Panc1 (cell line): ENCODE measurements at regions of chr1 and their contacts with region 1.

Region 1: DNA sequence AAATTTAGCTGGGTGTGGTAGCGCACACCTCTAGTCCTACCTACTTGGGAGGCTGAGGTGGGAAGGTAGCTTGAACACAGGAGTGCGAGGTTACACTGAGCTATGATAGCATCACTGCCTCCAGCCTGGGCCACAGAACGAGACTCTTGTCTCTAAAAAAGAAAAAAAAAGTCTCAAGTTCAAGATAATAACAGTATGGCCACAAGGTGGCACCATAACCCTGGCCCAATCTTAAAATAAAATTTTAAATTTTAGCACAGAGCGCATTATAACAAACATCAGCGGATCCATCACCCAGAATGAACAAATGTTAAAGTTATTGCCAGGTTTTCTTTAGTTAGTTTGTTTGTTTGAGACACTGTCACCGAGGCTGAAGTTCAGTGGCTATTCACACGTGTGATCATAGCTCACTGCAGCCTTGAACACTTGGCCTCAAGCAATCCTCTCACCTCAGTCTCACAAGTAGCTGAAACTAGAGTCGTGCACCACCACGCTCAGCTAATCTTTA is 2.9 kb upstream of the HTR6 start:
- DNase-seq: no peak
- ATAC-seq: no peak
- H3K4me3 ChIP-seq: no peak overlapping the region
- H3K27ac ChIP-seq: no peak overlapping the region
- H3K4me1 ChIP-seq: peaks cover 12% of the 10 kb centered on the region
- H3K27me3 ChIP-seq: peaks cover 5% of the 10 kb centered on the region; the same call in 1 of the 2 replicates
- CTCF ChIP-seq: peak; percentile 88

Region 2: GRCh38 chr1:19311959-19312781 is 349.6 kb before region 1 on chr1 and contains the starts of genes AKR7A2 and SLC66A1:
- CTCF ChIA-PET with region 1: no interaction called
- POLR2A ChIA-PET with region 1: no interaction called
- in situ Hi-C with region 1: no loop called
- intact Hi-C with region 1: no loop called
- DNase-seq: peak; percentile 56
- ATAC-seq: peak; percentile 95
- H3K4me3 ChIP-seq: peak within 1 kb of the TSS; percentile 80 to 82
- H3K27ac ChIP-seq: peak within 1 kb of the TSS; percentile 89
- H3K4me1 ChIP-seq: peaks cover 18% of the 10 kb centered on the region
- H3K27me3 ChIP-seq: no peaks in the 10 kb centered on the region
- CTCF ChIP-seq: no peak
- total RNA-seq, gene AKR7A2: 86.6 TPM
- total RNA-seq, gene SLC66A1: 42.0 TPM

Region 3: GRCh38 chr1:19704247-19705113 is 42.7 kb after region 1 on chr1:
- CTCF ChIA-PET with region 1: interaction called, 57 read pairs
- POLR2A ChIA-PET with region 1: no interaction called
- in situ Hi-C with region 1: no loop called
- intact Hi-C with region 1: loop called (anchors 2 kb)
- DNase-seq: peak; percentile 38
- ATAC-seq: peak; percentile 96
- H3K4me3 ChIP-seq: no peak overlapping the region
- H3K27ac ChIP-seq: no peak overlapping the region
- H3K4me1 ChIP-seq: no peaks in the 10 kb centered on the region
- H3K27me3 ChIP-seq: no peaks in the 10 kb centered on the region
- CTCF ChIP-seq: peak; percentile 97

Region 4: GRCh38 chr1:19885821-19886220 is 224.0 kb after region 1 on chr1:
- CTCF ChIA-PET with region 1: no interaction called
- POLR2A ChIA-PET with region 1: no interaction called
- in situ Hi-C with region 1: no loop called
- intact Hi-C with region 1: no loop called
- DNase-seq: no peak
- ATAC-seq: no peak
- H3K4me3 ChIP-seq: no peak overlapping the region
- H3K27ac ChIP-seq: no peak overlapping the region
- H3K4me1 ChIP-seq: peaks cover 9% of the 10 kb centered on the region
- H3K27me3 ChIP-seq: no peaks in the 10 kb centered on the region
- CTCF ChIP-seq: no peak